Caco-2 (cell line): ENCODE measurements at regions of chr2 and their contacts with region 1.

Region 1: DNA sequence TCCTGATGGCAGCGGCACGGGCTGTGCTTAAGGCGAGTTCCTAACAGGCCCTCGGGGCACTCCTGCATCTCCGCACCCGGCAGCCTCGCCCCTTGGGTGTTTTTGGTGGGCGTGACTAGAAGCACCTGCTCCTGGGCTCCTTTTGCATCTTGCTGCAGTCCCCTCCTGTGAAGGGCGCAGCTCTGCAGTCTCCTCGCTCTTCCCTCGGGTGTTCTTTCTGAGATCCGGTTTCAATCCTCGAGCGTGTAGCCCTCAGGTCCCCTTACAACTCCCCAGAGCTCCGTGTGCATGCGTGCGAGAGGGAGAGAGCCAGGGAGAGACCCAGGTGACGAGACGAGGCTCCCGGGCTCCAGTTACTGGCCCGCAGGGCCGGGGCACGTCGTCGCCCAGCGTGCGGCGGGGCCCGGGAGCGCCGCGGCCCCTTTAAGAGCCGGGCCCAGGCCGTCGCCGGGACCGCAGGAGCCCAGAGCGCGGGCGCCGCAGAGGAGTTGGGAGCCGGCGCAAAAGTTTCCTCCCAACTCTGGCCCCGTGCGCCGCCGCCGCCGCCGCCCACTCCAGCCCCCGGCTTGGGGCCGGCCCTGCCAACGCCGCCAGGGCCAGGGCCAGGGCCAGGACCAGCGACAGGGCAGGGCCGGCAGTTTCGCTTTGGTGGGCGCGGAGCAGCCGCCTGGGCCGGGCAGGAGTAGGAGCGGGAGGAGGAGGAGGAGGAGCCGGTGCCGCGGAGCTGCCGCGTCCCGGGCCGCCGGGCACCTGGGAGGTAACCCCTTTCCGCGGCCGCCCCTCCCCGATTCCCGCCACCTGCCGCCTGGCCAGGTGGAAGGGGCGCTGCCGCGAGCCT is at the start of gene PARD3B:
- DNase-seq: peak; percentile 89 to 91
- H3K4me3 ChIP-seq: peak within 1 kb of the TSS; percentile 69
- H3K4me3 Mint-ChIP-seq: peak within 1 kb of the TSS; percentile 99
- H3K27ac Mint-ChIP-seq: peak within 1 kb of the TSS; percentile 99
- H3K4me1 ChIP-seq: peaks cover 39% of the 10 kb centered on the region
- H3K4me1 Mint-ChIP-seq: peaks cover 27% of the 10 kb centered on the region
- H3K27me3 ChIP-seq: no peaks in the 10 kb centered on the region
- H3K27me3 Mint-ChIP-seq: no peaks in the 10 kb centered on the region
- CTCF ChIP-seq: no peak
- total RNA-seq, gene PARD3B: 66.5 and 68.9 TPM in 2 replicates

Region 2: GRCh38 chr2:204177977-204178540 is 367.2 kb before region 1 on chr2:
- CTCF ChIA-PET with region 1: no interaction called
- POLR2A ChIA-PET with region 1: no interaction called
- intact Hi-C with region 1: no loop called
- DNase-seq: peak; percentile 44 to 60
- H3K4me3 ChIP-seq: no peak overlapping the region
- H3K4me3 Mint-ChIP-seq: no peak overlapping the region
- H3K27ac Mint-ChIP-seq: no peak overlapping the region
- H3K4me1 ChIP-seq: no peaks in the 10 kb centered on the region
- H3K4me1 Mint-ChIP-seq: no peaks in the 10 kb centered on the region
- H3K27me3 ChIP-seq: peaks cover 2% of the 10 kb centered on the region
- H3K27me3 Mint-ChIP-seq: peaks cover 3% of the 10 kb centered on the region
- CTCF ChIP-seq: peak; percentile 56 to 65

Region 3: GRCh38 chr2:204486805-204487204 is 58.4 kb before region 1 on chr2:
- CTCF ChIA-PET with region 1: no interaction called
- POLR2A ChIA-PET with region 1: interaction called, 3 read pairs
- intact Hi-C with region 1: loop called (anchors 5 kb)
- DNase-seq: no peak
- H3K4me3 ChIP-seq: no peak overlapping the region
- H3K4me3 Mint-ChIP-seq: no peak overlapping the region
- H3K27ac Mint-ChIP-seq: no peak overlapping the region
- H3K4me1 ChIP-seq: peaks cover 68% of the 10 kb centered on the region
- H3K4me1 Mint-ChIP-seq: peaks cover 18% of the 10 kb centered on the region
- H3K27me3 ChIP-seq: no peaks in the 10 kb centered on the region
- H3K27me3 Mint-ChIP-seq: no peaks in the 10 kb centered on the region
- CTCF ChIP-seq: no peak

Region 4: GRCh38 chr2:204505946-204506345 is 39.3 kb before region 1 on chr2:
- CTCF ChIA-PET with region 1: no interaction called
- POLR2A ChIA-PET with region 1: no interaction called
- intact Hi-C with region 1: loop called (anchors 1 kb)
- DNase-seq: no peak
- H3K4me3 ChIP-seq: no peak overlapping the region
- H3K4me3 Mint-ChIP-seq: no peak overlapping the region
- H3K27ac Mint-ChIP-seq: no peak overlapping the region
- H3K4me1 ChIP-seq: peaks cover 23% of the 10 kb centered on the region
- H3K4me1 Mint-ChIP-seq: peaks cover 14% of the 10 kb centered on the region
- H3K27me3 ChIP-seq: no peaks in the 10 kb centered on the region
- H3K27me3 Mint-ChIP-seq: no peaks in the 10 kb centered on the region
- CTCF ChIP-seq: no peak

Region 5: GRCh38 chr2:204673877-204674276 is 128.6 kb after region 1 on chr2:
- CTCF ChIA-PET with region 1: no interaction called
- POLR2A ChIA-PET with region 1: no interaction called
- intact Hi-C with region 1: loop called (anchors 2 kb)
- DNase-seq: no peak
- H3K4me3 ChIP-seq: no peak overlapping the region
- H3K4me3 Mint-ChIP-seq: no peak overlapping the region
- H3K27ac Mint-ChIP-seq: peak overlapping the region; percentile 6
- H3K4me1 ChIP-seq: peaks cover 44% of the 10 kb centered on the region
- H3K4me1 Mint-ChIP-seq: peaks cover 43% of the 10 kb centered on the region
- H3K27me3 ChIP-seq: no peaks in the 10 kb centered on the region
- H3K27me3 Mint-ChIP-seq: no peaks in the 10 kb centered on the region
- CTCF ChIP-seq: no peak

Region 6: DNA sequence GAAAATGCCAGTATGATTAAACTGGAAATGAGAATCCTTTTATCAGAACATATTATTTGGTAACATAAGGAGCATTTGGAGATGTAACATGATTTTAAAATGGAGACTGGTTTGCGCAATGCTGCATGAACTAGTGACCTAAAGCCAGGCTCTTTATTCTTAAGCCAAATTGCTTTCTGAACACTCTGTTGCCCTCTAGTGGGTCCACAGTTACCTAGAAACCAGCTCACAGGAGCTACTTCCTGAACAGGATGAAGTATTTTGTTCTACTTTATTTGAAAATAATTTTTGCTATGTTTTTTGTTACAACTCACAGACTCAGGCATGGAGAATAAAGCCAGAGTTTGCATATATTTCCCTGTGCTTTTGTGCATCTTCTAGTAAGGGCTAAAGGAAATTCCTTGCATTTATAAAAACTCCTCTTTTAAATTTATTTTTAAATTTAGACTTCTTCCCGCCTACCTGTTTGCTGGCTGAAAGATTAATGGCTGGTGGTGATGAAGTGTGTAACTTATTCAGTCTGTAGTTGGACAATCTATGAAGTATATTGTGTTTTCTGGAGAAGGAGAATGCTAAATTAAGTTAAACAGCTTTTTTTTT is 146.8 kb after region 1 on chr2:
- CTCF ChIA-PET with region 1: interaction called, 3 read pairs
- POLR2A ChIA-PET with region 1: no interaction called
- intact Hi-C with region 1: loop called (anchors 2 kb)
- DNase-seq: peak; percentile 79 to 81
- H3K4me3 ChIP-seq: no peak overlapping the region
- H3K4me3 Mint-ChIP-seq: no peak overlapping the region
- H3K27ac Mint-ChIP-seq: no peak overlapping the region
- H3K4me1 ChIP-seq: peaks cover 20% of the 10 kb centered on the region
- H3K4me1 Mint-ChIP-seq: peaks cover 29% of the 10 kb centered on the region
- H3K27me3 ChIP-seq: no peaks in the 10 kb centered on the region
- H3K27me3 Mint-ChIP-seq: no peaks in the 10 kb centered on the region
- CTCF ChIP-seq: peak; percentile 61 to 92